Calu3 (cell line): ENCODE measurements at regions of chr4 and their contacts with region 1.

Region 1: GRCh38 chr4:142353149-142353738 is 492.9 kb downstream of the INPP4B start:
- DNase-seq: no peak
- H3K4me3 Mint-ChIP-seq: no peak overlapping the region
- H3K27ac Mint-ChIP-seq: peak overlapping the region; percentile 71
- H3K4me1 Mint-ChIP-seq: peaks cover 69% of the 10 kb centered on the region
- H3K27me3 Mint-ChIP-seq: no peaks in the 10 kb centered on the region
- CTCF ChIP-seq: peak; percentile 28

Region 2: GRCh38 chr4:142405021-142405694 is 51.9 kb after region 1 on chr4:
- CTCF ChIA-PET with region 1: no interaction called
- intact Hi-C with region 1: loop called (anchors 5 kb)
- DNase-seq: peak; percentile 15
- H3K4me3 Mint-ChIP-seq: peak overlapping the region; percentile 72
- H3K27ac Mint-ChIP-seq: peak overlapping the region; percentile 95
- H3K4me1 Mint-ChIP-seq: peaks cover 36% of the 10 kb centered on the region
- H3K27me3 Mint-ChIP-seq: no peaks in the 10 kb centered on the region
- CTCF ChIP-seq: no peak

Region 3: GRCh38 chr4:142516670-142517526 is 163.7 kb after region 1 on chr4:
- CTCF ChIA-PET with region 1: no interaction called
- intact Hi-C with region 1: loop called (anchors 5 kb)
- DNase-seq: peak; percentile 17
- H3K4me3 Mint-ChIP-seq: peak overlapping the region; percentile 7
- H3K27ac Mint-ChIP-seq: peak overlapping the region; percentile 83
- H3K4me1 Mint-ChIP-seq: peaks cover 39% of the 10 kb centered on the region
- H3K27me3 Mint-ChIP-seq: no peaks in the 10 kb centered on the region
- CTCF ChIP-seq: no peak

Region 4: GRCh38 chr4:142719854-142720541 is 366.8 kb after region 1 on chr4:
- CTCF ChIA-PET with region 1: interaction called, 4 read pairs
- intact Hi-C with region 1: loop called (anchors 5 kb)
- DNase-seq: no peak
- H3K4me3 Mint-ChIP-seq: no peak overlapping the region
- H3K27ac Mint-ChIP-seq: no peak overlapping the region
- H3K4me1 Mint-ChIP-seq: peaks cover 15% of the 10 kb centered on the region
- H3K27me3 Mint-ChIP-seq: no peaks in the 10 kb centered on the region
- CTCF ChIP-seq: no peak

Region 5: GRCh38 chr4:142840516-142841123 is 487.4 kb after region 1 on chr4:
- CTCF ChIA-PET with region 1: no interaction called
- intact Hi-C with region 1: loop called (anchors 2 kb)
- DNase-seq: no peak
- H3K4me3 Mint-ChIP-seq: no peak overlapping the region
- H3K27ac Mint-ChIP-seq: no peak overlapping the region
- H3K4me1 Mint-ChIP-seq: peaks cover 17% of the 10 kb centered on the region
- H3K27me3 Mint-ChIP-seq: no peaks in the 10 kb centered on the region
- CTCF ChIP-seq: peak; percentile 33